Activated CD4-positive, alpha-beta T cell treated with anti-CD3 and anti-CD28 coated beads, Interleukin-2, amount 10 ng/mL, durations not matched to agents 24 days and 14 days (primary cell): ENCODE measurements at regions of chr3 and their contacts with region 1.

Region 1: GRCh38 chr3:105868742-105869530 is at the start of gene CBLB:
- DNase-seq: peak; percentile 95
- H3K4me3 Mint-ChIP-seq: peak within 1 kb of the TSS; percentile 93
- H3K27ac Mint-ChIP-seq: peak within 1 kb of the TSS; percentile 98
- H3K4me1 Mint-ChIP-seq: peaks cover 31% of the 10 kb centered on the region
- H3K27me3 Mint-ChIP-seq: no peaks in the 10 kb centered on the region
- total RNA-seq, gene CBLB: 177 and 183 TPM in 2 replicates

Region 2: GRCh38 chr3:105676621-105677300 is 192.2 kb before region 1 on chr3:
- intact Hi-C with region 1: loop called (anchors 2 kb)
- DNase-seq: peak; percentile 48
- H3K4me3 Mint-ChIP-seq: no peak overlapping the region
- H3K27ac Mint-ChIP-seq: peak overlapping the region; percentile 89
- H3K4me1 Mint-ChIP-seq: peaks cover 26% of the 10 kb centered on the region
- H3K27me3 Mint-ChIP-seq: no peaks in the 10 kb centered on the region

Region 3: GRCh38 chr3:105752744-105753415 is 116.1 kb before region 1 on chr3:
- intact Hi-C with region 1: loop called (anchors 1 kb)
- DNase-seq: peak; percentile 83
- H3K4me3 Mint-ChIP-seq: peak overlapping the region; percentile 64
- H3K27ac Mint-ChIP-seq: peak overlapping the region; percentile 95
- H3K4me1 Mint-ChIP-seq: peaks cover 67% of the 10 kb centered on the region
- H3K27me3 Mint-ChIP-seq: no peaks in the 10 kb centered on the region

Region 4: DNA sequence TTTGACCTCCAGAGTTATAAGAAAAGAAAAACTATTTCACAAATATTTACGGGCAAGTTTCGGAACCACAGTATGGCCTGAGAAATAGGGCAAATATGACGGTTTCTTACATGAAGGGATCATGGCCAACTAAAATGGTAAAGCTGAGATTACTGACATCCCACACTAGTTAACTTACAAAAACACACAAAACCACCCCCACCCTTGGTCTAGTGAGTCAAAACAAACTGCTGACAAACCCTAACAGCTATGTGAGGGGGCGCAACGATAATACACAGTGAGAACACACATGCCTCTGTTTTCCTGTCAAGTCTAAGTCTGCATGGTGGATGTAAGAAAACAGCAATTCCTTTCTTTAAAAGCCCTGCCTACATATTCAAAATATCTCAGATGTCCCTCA is 32.4 kb before region 1 on chr3:
- intact Hi-C with region 1: loop called (anchors 1 kb)
- DNase-seq: peak; percentile 68
- H3K4me3 Mint-ChIP-seq: peak overlapping the region; percentile 59
- H3K27ac Mint-ChIP-seq: peak overlapping the region; percentile 90
- H3K4me1 Mint-ChIP-seq: peaks cover 60% of the 10 kb centered on the region
- H3K27me3 Mint-ChIP-seq: no peaks in the 10 kb centered on the region

Region 5: DNA sequence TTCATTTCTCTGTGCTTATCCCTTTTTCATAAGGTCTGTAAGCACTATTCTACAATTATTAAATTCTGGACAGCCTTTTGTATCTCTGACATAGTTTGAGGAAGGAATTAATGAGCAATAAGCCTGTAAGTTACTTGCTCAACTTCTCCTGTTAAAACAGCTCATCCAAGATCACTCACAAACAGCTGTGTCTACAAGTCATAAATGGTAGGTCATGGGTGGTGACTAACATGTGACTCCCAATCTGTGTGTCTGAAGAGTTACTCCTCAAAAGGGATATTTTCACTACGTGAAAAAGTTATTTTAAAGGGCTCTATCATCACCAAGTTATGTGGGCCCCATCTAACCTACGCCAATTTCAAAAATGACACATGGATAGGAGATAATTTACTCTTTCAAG is 145.0 kb after region 1 on chr3:
- intact Hi-C with region 1: loop called (anchors 2 kb)
- DNase-seq: no peak
- H3K4me3 Mint-ChIP-seq: no peak overlapping the region
- H3K27ac Mint-ChIP-seq: peak overlapping the region; percentile 51
- H3K4me1 Mint-ChIP-seq: peaks cover 31% of the 10 kb centered on the region
- H3K27me3 Mint-ChIP-seq: no peaks in the 10 kb centered on the region

Region 6: DNA sequence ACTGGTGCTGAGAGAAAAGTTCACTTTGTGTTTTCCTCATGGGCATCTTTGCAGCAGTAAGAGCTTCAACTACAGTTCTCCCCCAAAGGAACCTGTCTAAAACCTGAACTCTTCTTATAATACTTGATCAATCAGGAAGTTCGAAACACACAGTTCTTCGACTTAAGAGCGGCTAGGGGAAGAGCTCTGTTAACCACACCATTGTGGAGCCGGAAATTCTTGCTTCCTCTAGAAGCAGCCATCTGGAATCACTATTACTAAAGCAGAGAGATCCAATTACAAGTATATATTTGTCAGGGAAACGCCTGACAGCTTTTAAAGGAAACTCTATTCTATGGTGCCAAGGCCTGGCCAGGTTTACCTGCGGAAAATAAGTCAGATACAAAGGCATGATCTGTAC is 337.2 kb after region 1 on chr3:
- intact Hi-C with region 1: loop called (anchors 2 kb)
- DNase-seq: peak; percentile 75
- H3K4me3 Mint-ChIP-seq: peak overlapping the region; percentile 65
- H3K27ac Mint-ChIP-seq: peak overlapping the region; percentile 97
- H3K4me1 Mint-ChIP-seq: peaks cover 39% of the 10 kb centered on the region
- H3K27me3 Mint-ChIP-seq: no peaks in the 10 kb centered on the region

Region 7: DNA sequence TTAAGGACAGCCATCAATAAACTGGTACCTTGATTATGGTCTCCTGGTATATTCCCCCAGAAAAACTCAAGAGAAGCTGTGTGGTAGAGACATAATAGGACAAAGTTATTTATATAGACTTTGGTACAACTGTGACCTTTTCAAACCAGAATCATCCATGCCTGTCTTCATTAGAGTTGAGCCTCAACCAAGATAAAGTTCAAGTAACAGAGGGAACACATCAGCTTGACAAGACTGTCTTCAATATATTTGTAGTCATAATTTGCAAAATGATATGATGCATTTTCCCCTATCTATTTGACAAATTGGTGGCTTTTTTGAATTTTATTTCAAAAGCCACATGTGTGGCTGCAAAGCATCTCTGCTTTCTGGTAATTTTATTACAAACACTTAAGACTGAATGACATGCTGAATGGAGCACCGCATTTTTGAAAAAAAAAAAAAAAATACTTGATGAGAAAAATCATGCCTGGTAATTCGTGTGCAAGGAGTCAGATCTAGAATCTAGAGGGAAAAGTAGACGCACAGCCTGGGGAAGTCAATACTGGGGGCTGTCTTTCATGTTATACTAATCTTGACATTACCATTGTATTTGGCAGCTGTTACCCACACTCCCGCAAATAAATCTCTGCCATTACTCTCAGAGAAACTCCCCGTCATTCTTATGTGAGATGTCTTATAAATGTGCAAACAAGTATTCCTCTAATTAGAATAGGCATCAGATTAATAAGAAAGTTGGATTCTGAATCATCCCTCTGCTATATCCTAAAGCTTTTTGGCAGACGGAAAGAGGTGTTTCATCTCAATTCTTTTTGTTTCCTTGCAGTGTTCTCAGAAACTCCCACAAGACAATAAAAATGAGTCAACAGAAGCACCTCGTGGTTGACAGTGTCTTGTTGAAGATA is 554.6 kb after region 1 on chr3:
- intact Hi-C with region 1: loop called (anchors 2 kb)
- DNase-seq: no peak
- H3K4me3 Mint-ChIP-seq: peak overlapping the region; percentile 13
- H3K27ac Mint-ChIP-seq: peak overlapping the region; percentile 85
- H3K4me1 Mint-ChIP-seq: peaks cover 43% of the 10 kb centered on the region
- H3K27me3 Mint-ChIP-seq: no peaks in the 10 kb centered on the region